ENCODE measurements at regions of chr7 and their contacts with region 1.

Region 1: DNA sequence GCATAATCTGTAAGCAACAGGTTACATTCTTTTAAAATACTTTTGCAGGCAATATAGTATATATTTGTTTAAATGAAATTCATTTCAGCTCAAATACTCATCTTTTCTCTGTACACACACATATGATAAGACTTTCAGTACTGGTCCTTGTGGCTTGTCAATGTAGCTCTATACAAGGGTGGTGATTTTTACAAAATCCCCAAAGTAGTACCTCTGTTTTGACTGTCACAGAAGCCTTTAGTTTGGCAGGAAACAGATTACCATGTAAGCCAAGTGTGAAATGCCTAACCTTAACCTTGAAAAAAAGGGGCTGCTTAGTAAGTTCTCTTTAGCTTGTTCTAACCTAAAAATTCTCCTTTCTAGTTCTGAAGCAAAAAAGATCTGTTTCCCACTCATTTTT is 87.9 kb downstream of the KCND2 start:
- DNase-seq: peak; percentile 61
- ATAC-seq: peak; percentile 97
- H3K4me3 ChIP-seq: no peak overlapping the region
- H3K27ac ChIP-seq: peak overlapping the region; percentile 50
- H3K4me1 ChIP-seq: peaks cover 9% of the 10 kb centered on the region
- H3K27me3 ChIP-seq: no peaks in the 10 kb centered on the region
- CTCF ChIP-seq: no peak
- EP300 ChIP-seq: peak in 1 of 2 experiments; percentile 41; a peak in 1 of 4 replicates
- POLR2A ChIP-seq: no peak
- RAD21 ChIP-seq: 0 out of 2 replicates have a peak, but pooled peaks have one; percentile 6

Region 2: GRCh38 chr7:120110169-120110568 is 250.7 kb before region 1 on chr7:
- CTCF ChIA-PET with region 1: no interaction called
- POLR2A ChIA-PET with region 1: no interaction called
- RAD21 ChIA-PET with region 1: no interaction called
- SMC1A ChIA-PET with region 1: no interaction called
- in situ Hi-C with region 1: no loop called
- intact Hi-C with region 1: no loop called
- DNase-seq: no peak
- ATAC-seq: no peak
- H3K4me3 ChIP-seq: no peak overlapping the region
- H3K27ac ChIP-seq: no peak overlapping the region
- H3K4me1 ChIP-seq: no peaks in the 10 kb centered on the region
- H3K27me3 ChIP-seq: no peaks in the 10 kb centered on the region
- CTCF ChIP-seq: no peak
- EP300 ChIP-seq: no peak
- POLR2A ChIP-seq: no peak
- RAD21 ChIP-seq: no peak

Region 3: GRCh38 chr7:120337308-120337907 is 23.5 kb before region 1 on chr7:
- CTCF ChIA-PET with region 1: interaction called, 10 read pairs
- POLR2A ChIA-PET with region 1: interaction called, 3 read pairs
- RAD21 ChIA-PET with region 1: interaction called, 4 read pairs
- SMC1A ChIA-PET with region 1: interaction called, 9 read pairs
- in situ Hi-C with region 1: no loop called
- intact Hi-C with region 1: no loop called
- DNase-seq: no peak
- ATAC-seq: peak; percentile 82
- H3K4me3 ChIP-seq: no peak overlapping the region
- H3K27ac ChIP-seq: no peak overlapping the region
- H3K4me1 ChIP-seq: peaks cover 5% of the 10 kb centered on the region; the same call in 1 of the 2 replicates
- H3K27me3 ChIP-seq: no peaks in the 10 kb centered on the region
- CTCF ChIP-seq: peak; percentile 42 to 49 (median 47)
- EP300 ChIP-seq: no peak
- POLR2A ChIP-seq: no peak
- RAD21 ChIP-seq: peak; percentile 37; the same call in 1 of the 2 replicates

Region 4: DNA sequence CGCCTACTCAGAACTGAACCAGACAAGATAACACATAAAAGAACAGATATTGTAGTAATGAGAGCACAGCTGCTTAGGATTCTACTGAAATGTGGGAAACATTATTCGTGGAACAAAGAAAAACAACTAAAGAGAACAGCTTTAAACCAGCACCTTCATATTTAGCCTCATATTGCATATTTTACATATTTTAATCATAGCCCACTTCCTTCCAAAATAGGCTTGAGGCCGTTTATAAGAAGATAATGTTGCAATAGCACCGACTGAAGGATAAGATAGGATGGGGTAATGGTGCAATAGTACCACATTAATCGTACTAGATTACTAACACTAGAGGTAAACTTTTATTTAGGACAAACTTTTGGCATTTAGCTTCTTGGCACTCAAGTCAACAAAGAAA is 16.6 kb before region 1 on chr7:
- CTCF ChIA-PET with region 1: interaction called, 25 read pairs
- POLR2A ChIA-PET with region 1: no interaction called
- RAD21 ChIA-PET with region 1: interaction called, 22 read pairs
- SMC1A ChIA-PET with region 1: interaction called, 8 read pairs
- in situ Hi-C with region 1: no loop called
- intact Hi-C with region 1: no loop called
- DNase-seq: no peak
- ATAC-seq: no peak
- H3K4me3 ChIP-seq: no peak overlapping the region
- H3K27ac ChIP-seq: no peak overlapping the region
- H3K4me1 ChIP-seq: no peaks in the 10 kb centered on the region
- H3K27me3 ChIP-seq: no peaks in the 10 kb centered on the region
- CTCF ChIP-seq: no peak
- EP300 ChIP-seq: no peak
- POLR2A ChIP-seq: no peak
- RAD21 ChIP-seq: no peak

Region 5: DNA sequence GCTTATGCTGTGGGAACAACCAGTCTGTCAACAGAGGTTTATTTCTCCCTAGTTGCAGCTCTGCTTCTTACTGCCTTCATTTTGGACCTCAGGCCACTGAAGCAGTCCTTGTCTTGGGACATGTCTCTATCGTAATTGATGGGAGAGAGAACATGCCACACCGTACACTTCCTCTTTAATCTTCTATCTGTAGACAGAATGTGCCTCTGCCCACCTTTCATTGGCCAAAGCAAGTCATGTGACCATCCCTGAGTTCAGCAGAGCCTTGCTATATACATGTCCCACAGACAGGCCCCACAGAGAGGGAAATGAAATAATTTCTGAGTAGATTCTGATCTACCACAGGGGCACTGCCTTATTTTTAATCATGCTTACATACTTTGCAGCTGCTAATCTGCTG is 10.0 kb after region 1 on chr7:
- CTCF ChIA-PET with region 1: interaction called, 8 read pairs
- POLR2A ChIA-PET with region 1: interaction called, 3 read pairs
- RAD21 ChIA-PET with region 1: interaction called, 9 read pairs
- SMC1A ChIA-PET with region 1: interaction called, 27 read pairs
- in situ Hi-C with region 1: no loop called
- intact Hi-C with region 1: no loop called
- DNase-seq: no peak
- ATAC-seq: peak; percentile 98
- H3K4me3 ChIP-seq: no peak overlapping the region
- H3K27ac ChIP-seq: no peak overlapping the region
- H3K4me1 ChIP-seq: no peaks in the 10 kb centered on the region
- H3K27me3 ChIP-seq: no peaks in the 10 kb centered on the region
- CTCF ChIP-seq: no peak
- EP300 ChIP-seq: no peak
- POLR2A ChIP-seq: no peak
- RAD21 ChIP-seq: no peak